ENCODE measurements at regions of chr10 and their contacts with region 1.

Region 1: DNA sequence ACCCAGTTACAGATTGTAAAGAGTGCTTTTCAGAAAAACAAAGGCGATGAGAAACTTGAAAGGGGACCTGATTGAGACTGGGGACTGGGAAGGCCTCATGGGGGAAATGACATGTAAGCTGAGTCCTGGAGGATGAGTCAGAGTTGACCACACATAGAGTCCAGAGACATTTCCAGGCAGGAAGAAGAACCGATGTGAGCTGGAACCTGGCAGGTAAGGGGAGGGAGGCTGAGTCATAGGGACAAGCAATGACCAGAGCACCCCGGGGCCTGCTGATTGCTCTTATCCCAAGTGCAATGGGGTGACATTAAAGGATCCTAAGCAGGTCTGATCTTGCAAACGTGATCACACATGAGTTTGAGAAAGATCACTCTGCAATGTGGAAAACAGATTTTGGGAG is 11.7 kb downstream of the TLL2 start:
- DNase-seq: peak; percentile 94
- H3K4me3 Mint-ChIP-seq: no peak overlapping the region
- H3K27ac Mint-ChIP-seq: peak overlapping the region; percentile 21
- H3K4me1 Mint-ChIP-seq: peaks cover 14% of the 10 kb centered on the region
- H3K27me3 Mint-ChIP-seq: no peaks in the 10 kb centered on the region
- CTCF ChIP-seq: no peak

Region 2: GRCh38 chr10:96491299-96491698 is 10.7 kb before region 1 on chr10:
- CTCF ChIA-PET with region 1: interaction called, 18 read pairs
- POLR2A ChIA-PET with region 1: interaction called, 3 read pairs
- intact Hi-C with region 1: no loop called
- DNase-seq: peak; percentile 41
- H3K4me3 Mint-ChIP-seq: no peak overlapping the region
- H3K27ac Mint-ChIP-seq: no peak overlapping the region
- H3K4me1 Mint-ChIP-seq: no peaks in the 10 kb centered on the region
- H3K27me3 Mint-ChIP-seq: peaks cover 50% of the 10 kb centered on the region
- CTCF ChIP-seq: peak; percentile 11

Measured in MCF 10A (cell line).